Naive thymus-derived CD4-positive, alpha-beta T cell (primary cell): ENCODE measurements at regions of chrX and their contacts with region 1.

Region 1: GRCh38 chrX:68828740-68829552 is at the start of gene EFNB1:
- DNase-seq: peak; percentile 67 to 90 (median 84)
- ATAC-seq: peak; percentile 97
- H3K4me3 ChIP-seq: peak within 1 kb of the TSS; percentile 76
- H3K4me3 Mint-ChIP-seq: peak within 1 kb of the TSS; percentile 90 to 96 (median 94)
- H3K27ac ChIP-seq: peak within 1 kb of the TSS; percentile 69
- H3K27ac Mint-ChIP-seq: peak within 1 kb of the TSS; percentile 75 to 94 (median 83)
- H3K4me1 ChIP-seq: peaks cover 6 to 9% of the 10 kb centered on the region in 2 donors
- H3K4me1 Mint-ChIP-seq: peaks cover 7 to 24% (median 17%) of the 10 kb centered on the region in 7 donors
- H3K27me3 ChIP-seq: no peaks in the 10 kb centered on the region
- H3K27me3 Mint-ChIP-seq: peaks cover 0 to 15% (median 0%) of the 10 kb centered on the region in 5 donors
- total RNA-seq, gene EFNB1: 2.6 to 4.8 (median 4.1) TPM

Region 2: GRCh38 chrX:68511255-68511654 is 317.7 kb before region 1 on chrX:
- CTCF ChIA-PET with region 1: no interaction called
- POLR2A ChIA-PET with region 1: no interaction called
- intact Hi-C with region 1: loop called in 1 of 2 experiments (anchors 5 kb)
- DNase-seq: peak in 6 of 9 donors; percentile 10 to 43 (median 29)
- ATAC-seq: peak; percentile 65
- H3K4me3 ChIP-seq: no peak overlapping the region
- H3K4me3 Mint-ChIP-seq: no peak overlapping the region
- H3K27ac ChIP-seq: no peak overlapping the region
- H3K27ac Mint-ChIP-seq: peak overlapping the region in 2 of 9 donors; percentile 10 to 29
- H3K4me1 ChIP-seq: peaks cover 0 to 5% of the 10 kb centered on the region in 2 donors
- H3K4me1 Mint-ChIP-seq: peaks cover 13 to 38% (median 27%) of the 10 kb centered on the region in 7 donors
- H3K27me3 ChIP-seq: no peaks in the 10 kb centered on the region
- H3K27me3 Mint-ChIP-seq: no peaks in the 10 kb centered on the region

Region 3: GRCh38 chrX:68746988-68747387 is 82.0 kb before region 1 on chrX:
- CTCF ChIA-PET with region 1: no interaction called
- POLR2A ChIA-PET with region 1: no interaction called
- intact Hi-C with region 1: no loop called
- DNase-seq: no peak
- ATAC-seq: no peak
- H3K4me3 ChIP-seq: no peak overlapping the region
- H3K4me3 Mint-ChIP-seq: no peak overlapping the region
- H3K27ac ChIP-seq: no peak overlapping the region
- H3K27ac Mint-ChIP-seq: peak overlapping the region in 1 of 9 donors; percentile 73
- H3K4me1 ChIP-seq: no peaks in the 10 kb centered on the region
- H3K4me1 Mint-ChIP-seq: peaks cover 0 to 2% (median 0%) of the 10 kb centered on the region in 7 donors
- H3K27me3 ChIP-seq: no peaks in the 10 kb centered on the region
- H3K27me3 Mint-ChIP-seq: no peaks in the 10 kb centered on the region

Region 4: GRCh38 chrX:68794461-68794860 is 34.5 kb before region 1 on chrX:
- CTCF ChIA-PET with region 1: no interaction called
- POLR2A ChIA-PET with region 1: no interaction called
- intact Hi-C with region 1: no loop called
- DNase-seq: no peak
- ATAC-seq: no peak
- H3K4me3 ChIP-seq: no peak overlapping the region
- H3K4me3 Mint-ChIP-seq: no peak overlapping the region
- H3K27ac ChIP-seq: no peak overlapping the region
- H3K27ac Mint-ChIP-seq: no peak overlapping the region
- H3K4me1 ChIP-seq: no peaks in the 10 kb centered on the region
- H3K4me1 Mint-ChIP-seq: no peaks in the 10 kb centered on the region
- H3K27me3 ChIP-seq: no peaks in the 10 kb centered on the region
- H3K27me3 Mint-ChIP-seq: peaks cover 0 to 8% (median 0%) of the 10 kb centered on the region in 5 donors

Region 5: GRCh38 chrX:69093960-69094871 is 265.3 kb after region 1 on chrX:
- CTCF ChIA-PET with region 1: interaction called, 4 read pairs
- POLR2A ChIA-PET with region 1: no interaction called
- intact Hi-C with region 1: loop called (anchors 1 to 5 kb)
- DNase-seq: peak in 7 of 9 donors; percentile 5 to 37 (median 24)
- ATAC-seq: no peak
- H3K4me3 ChIP-seq: no peak overlapping the region
- H3K4me3 Mint-ChIP-seq: no peak overlapping the region
- H3K27ac ChIP-seq: no peak overlapping the region
- H3K27ac Mint-ChIP-seq: no peak overlapping the region
- H3K4me1 ChIP-seq: no peaks in the 10 kb centered on the region
- H3K4me1 Mint-ChIP-seq: no peaks in the 10 kb centered on the region
- H3K27me3 ChIP-seq: no peaks in the 10 kb centered on the region
- H3K27me3 Mint-ChIP-seq: no peaks in the 10 kb centered on the region

Region 6: GRCh38 chrX:69222103-69223090 is 393.5 kb after region 1 on chrX:
- CTCF ChIA-PET with region 1: interaction called, 40 read pairs
- POLR2A ChIA-PET with region 1: interaction called, 5 read pairs
- intact Hi-C with region 1: loop called (anchors 1 kb)
- DNase-seq: peak; percentile 47 to 76 (median 66)
- ATAC-seq: peak; percentile 84
- H3K4me3 ChIP-seq: no peak overlapping the region
- H3K4me3 Mint-ChIP-seq: peak overlapping the region in 1 of 10 donors; percentile 52
- H3K27ac ChIP-seq: no peak overlapping the region
- H3K27ac Mint-ChIP-seq: no peak overlapping the region
- H3K4me1 ChIP-seq: no peaks in the 10 kb centered on the region
- H3K4me1 Mint-ChIP-seq: no peaks in the 10 kb centered on the region
- H3K27me3 ChIP-seq: no peaks in the 10 kb centered on the region
- H3K27me3 Mint-ChIP-seq: no peaks in the 10 kb centered on the region

Region 7: GRCh38 chrX:70096052-70096451 is 1267.1 kb after region 1 on chrX:
- CTCF ChIA-PET with region 1: no interaction called
- POLR2A ChIA-PET with region 1: no interaction called
- intact Hi-C with region 1: loop called in 1 of 2 experiments (anchors 5 kb)
- DNase-seq: no peak
- ATAC-seq: no peak
- H3K4me3 ChIP-seq: no peak overlapping the region
- H3K4me3 Mint-ChIP-seq: no peak overlapping the region
- H3K27ac ChIP-seq: no peak overlapping the region
- H3K27ac Mint-ChIP-seq: no peak overlapping the region
- H3K4me1 ChIP-seq: no peaks in the 10 kb centered on the region
- H3K4me1 Mint-ChIP-seq: peaks cover 0 to 3% (median 0%) of the 10 kb centered on the region in 7 donors
- H3K27me3 ChIP-seq: no peaks in the 10 kb centered on the region
- H3K27me3 Mint-ChIP-seq: peaks cover 3 to 8% (median 7%) of the 10 kb centered on the region in 5 donors